CD8-positive, alpha-beta T cell (primary cell): ENCODE measurements at regions of chr4 and their contacts with region 1.

Region 1: DNA sequence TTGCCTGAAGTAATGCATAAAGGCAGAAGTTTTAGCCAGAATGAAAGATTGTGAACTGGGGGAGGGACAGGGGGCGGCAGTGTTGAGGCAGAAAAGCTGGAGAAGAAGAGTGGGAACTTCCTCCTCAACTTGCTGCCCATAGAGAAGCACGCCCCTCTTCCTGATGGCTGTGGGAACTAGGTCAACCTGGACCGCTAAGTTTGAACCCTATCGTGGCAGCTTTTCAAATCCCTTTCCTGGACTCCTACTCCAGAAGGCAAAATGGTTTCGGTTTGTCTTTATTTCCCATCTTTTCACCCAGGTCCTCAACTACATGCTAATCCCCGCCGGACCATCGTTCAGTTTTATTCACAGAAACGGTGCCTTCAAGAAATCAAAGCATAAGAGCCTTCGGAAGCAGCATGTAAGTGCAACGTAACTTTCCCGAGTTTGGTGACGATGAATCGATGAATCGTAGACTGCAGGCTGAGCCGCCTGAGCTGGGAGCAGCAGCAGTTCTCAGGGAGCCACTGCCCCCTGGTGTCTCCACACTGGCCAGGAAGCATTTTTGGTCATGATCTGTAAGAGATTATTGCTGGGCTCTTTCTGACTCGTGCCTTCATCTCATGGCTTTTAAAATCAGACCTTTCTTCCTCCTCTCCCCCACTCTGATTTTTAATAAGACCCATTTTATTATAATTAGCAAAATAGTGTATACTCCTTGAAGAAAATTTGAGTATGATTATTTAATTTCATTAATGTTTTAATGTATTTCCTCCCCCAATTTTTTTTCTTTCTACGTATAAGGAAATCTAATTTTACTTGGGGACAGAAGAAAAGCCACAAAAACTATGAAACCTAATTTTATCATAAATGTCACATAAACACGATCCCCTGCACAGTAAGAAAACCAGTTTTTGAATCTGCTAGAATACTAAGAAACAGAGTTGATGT is 21.4 kb downstream of the SPINK2 start:
- DNase-seq: peak; percentile 66 to 91 (median 82)
- ATAC-seq: peak; percentile 98
- H3K4me3 ChIP-seq: peak overlapping the region; percentile 53 to 78
- H3K4me3 Mint-ChIP-seq: peak overlapping the region; percentile 94
- H3K27ac ChIP-seq: peak overlapping the region; percentile 43 to 76
- H3K27ac Mint-ChIP-seq: peak overlapping the region; percentile 90
- H3K4me1 ChIP-seq: peaks cover 14% of the 10 kb centered on the region
- H3K4me1 Mint-ChIP-seq: peaks cover 23% of the 10 kb centered on the region
- H3K27me3 ChIP-seq: no peaks in the 10 kb centered on the region
- H3K27me3 Mint-ChIP-seq: no peaks in the 10 kb centered on the region
- CTCF ChIP-seq: peak; percentile 83

Region 2: GRCh38 chr4:56424697-56425514 is 375.2 kb before region 1 on chr4:
- CTCF ChIA-PET with region 1: interaction called, 22 read pairs
- POLR2A ChIA-PET with region 1: no interaction called
- intact Hi-C with region 1: loop called (anchors 1 kb)
- DNase-seq: peak in 7 of 9 experiments; percentile 21 to 71 (median 52)
- ATAC-seq: peak; percentile 61
- H3K4me3 ChIP-seq: no peak overlapping the region
- H3K4me3 Mint-ChIP-seq: no peak overlapping the region
- H3K27ac ChIP-seq: no peak overlapping the region
- H3K27ac Mint-ChIP-seq: no peak overlapping the region
- H3K4me1 ChIP-seq: no peaks in the 10 kb centered on the region
- H3K4me1 Mint-ChIP-seq: peaks cover 8% of the 10 kb centered on the region
- H3K27me3 ChIP-seq: no peaks in the 10 kb centered on the region
- H3K27me3 Mint-ChIP-seq: no peaks in the 10 kb centered on the region
- CTCF ChIP-seq: peak; percentile 90

Region 3: DNA sequence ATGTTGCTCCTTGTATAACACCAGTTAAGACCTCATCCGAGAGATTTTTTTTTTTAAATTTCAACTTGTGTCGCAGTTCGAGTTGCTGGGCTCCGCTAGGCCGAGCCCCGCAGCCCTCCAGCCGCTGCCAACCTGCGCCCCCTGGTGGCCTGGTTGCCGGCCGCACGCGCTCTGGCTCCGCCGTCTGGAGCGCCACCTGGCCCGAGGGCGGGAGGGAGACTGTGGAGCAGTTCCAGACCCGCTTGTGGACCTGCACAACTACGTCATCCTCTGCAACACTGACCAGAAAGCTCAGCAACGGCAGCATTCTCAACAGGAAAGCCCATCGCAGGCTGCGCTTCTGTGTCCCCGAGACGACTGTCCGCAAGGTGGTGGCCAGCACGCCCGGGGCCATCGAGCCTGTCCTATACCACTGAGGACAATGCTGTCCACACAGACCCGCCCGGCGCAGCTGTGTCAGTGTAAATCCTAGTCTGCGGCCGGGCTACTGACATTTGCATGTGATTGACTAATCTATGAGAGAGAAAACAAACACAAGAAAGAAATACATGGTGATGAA is 255.4 kb before region 1 on chr4:
- CTCF ChIA-PET with region 1: interaction called, 7 read pairs
- POLR2A ChIA-PET with region 1: no interaction called
- intact Hi-C with region 1: loop called in 1 of 2 experiments (anchors 1 kb)
- DNase-seq: peak; percentile 77 to 95 (median 85)
- ATAC-seq: peak; percentile 99
- H3K4me3 ChIP-seq: peak overlapping the region; percentile 27 to 38
- H3K4me3 Mint-ChIP-seq: peak overlapping the region; percentile 73
- H3K27ac ChIP-seq: no peak overlapping the region
- H3K27ac Mint-ChIP-seq: no peak overlapping the region
- H3K4me1 ChIP-seq: peaks cover 14% of the 10 kb centered on the region
- H3K4me1 Mint-ChIP-seq: peaks cover 15% of the 10 kb centered on the region
- H3K27me3 ChIP-seq: peaks cover 0 to 6% of the 10 kb centered on the region in 2 experiments
- H3K27me3 Mint-ChIP-seq: no peaks in the 10 kb centered on the region
- CTCF ChIP-seq: peak; percentile 98

Region 4: GRCh38 chr4:56626963-56627362 is 173.1 kb before region 1 on chr4:
- CTCF ChIA-PET with region 1: interaction called, 11 read pairs
- POLR2A ChIA-PET with region 1: no interaction called
- intact Hi-C with region 1: no loop called
- DNase-seq: peak in 2 of 9 experiments; percentile 19 to 32
- ATAC-seq: no peak
- H3K4me3 ChIP-seq: no peak overlapping the region
- H3K4me3 Mint-ChIP-seq: no peak overlapping the region
- H3K27ac ChIP-seq: no peak overlapping the region
- H3K27ac Mint-ChIP-seq: no peak overlapping the region
- H3K4me1 ChIP-seq: no peaks in the 10 kb centered on the region
- H3K4me1 Mint-ChIP-seq: no peaks in the 10 kb centered on the region
- H3K27me3 ChIP-seq: no peaks in the 10 kb centered on the region
- H3K27me3 Mint-ChIP-seq: peaks cover 1% of the 10 kb centered on the region
- CTCF ChIP-seq: no peak

Region 5: DNA sequence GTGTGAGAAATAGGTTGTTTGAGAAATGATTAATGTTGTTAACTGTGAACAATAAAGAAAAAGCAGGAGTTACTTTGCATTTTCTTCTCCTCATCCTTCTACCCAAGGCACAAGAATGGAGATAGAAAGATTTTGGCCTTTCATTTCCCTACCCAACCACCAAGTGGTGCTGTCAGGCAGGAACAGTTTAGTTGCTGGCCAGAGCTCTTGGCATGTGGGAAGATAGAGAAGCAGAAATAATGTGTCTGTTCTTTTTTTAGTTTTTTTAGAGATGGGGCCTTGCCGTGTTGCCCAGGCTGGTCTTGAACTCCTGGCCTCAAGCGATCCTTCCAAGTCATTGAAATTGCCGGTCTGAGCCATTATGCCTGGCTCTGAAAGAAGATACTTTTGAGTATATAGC is 131.8 kb before region 1 on chr4:
- CTCF ChIA-PET with region 1: interaction called, 4 read pairs
- POLR2A ChIA-PET with region 1: no interaction called
- intact Hi-C with region 1: loop called (anchors 1 to 10 kb)
- DNase-seq: peak in 2 of 9 experiments; percentile 18 to 28
- ATAC-seq: no peak
- H3K4me3 ChIP-seq: no peak overlapping the region
- H3K4me3 Mint-ChIP-seq: no peak overlapping the region
- H3K27ac ChIP-seq: no peak overlapping the region
- H3K27ac Mint-ChIP-seq: no peak overlapping the region
- H3K4me1 ChIP-seq: no peaks in the 10 kb centered on the region
- H3K4me1 Mint-ChIP-seq: no peaks in the 10 kb centered on the region
- H3K27me3 ChIP-seq: no peaks in the 10 kb centered on the region
- H3K27me3 Mint-ChIP-seq: peaks cover 14% of the 10 kb centered on the region
- CTCF ChIP-seq: no peak

Region 6: GRCh38 chr4:56757821-56758411 is 42.2 kb before region 1 on chr4:
- CTCF ChIA-PET with region 1: interaction called, 30 read pairs
- POLR2A ChIA-PET with region 1: interaction called, 8 read pairs
- intact Hi-C with region 1: loop called in 1 of 2 experiments (anchors 1 kb)
- DNase-seq: peak; percentile 26 to 85 (median 65)
- ATAC-seq: peak; percentile 82
- H3K4me3 ChIP-seq: peak overlapping the region; percentile 33 to 44
- H3K4me3 Mint-ChIP-seq: peak overlapping the region; percentile 82
- H3K27ac ChIP-seq: peak overlapping the region; percentile 29 to 81
- H3K27ac Mint-ChIP-seq: peak overlapping the region; percentile 98
- H3K4me1 ChIP-seq: peaks cover 41% of the 10 kb centered on the region
- H3K4me1 Mint-ChIP-seq: peaks cover 60% of the 10 kb centered on the region
- H3K27me3 ChIP-seq: no peaks in the 10 kb centered on the region
- H3K27me3 Mint-ChIP-seq: no peaks in the 10 kb centered on the region
- CTCF ChIP-seq: no peak

Region 7: DNA sequence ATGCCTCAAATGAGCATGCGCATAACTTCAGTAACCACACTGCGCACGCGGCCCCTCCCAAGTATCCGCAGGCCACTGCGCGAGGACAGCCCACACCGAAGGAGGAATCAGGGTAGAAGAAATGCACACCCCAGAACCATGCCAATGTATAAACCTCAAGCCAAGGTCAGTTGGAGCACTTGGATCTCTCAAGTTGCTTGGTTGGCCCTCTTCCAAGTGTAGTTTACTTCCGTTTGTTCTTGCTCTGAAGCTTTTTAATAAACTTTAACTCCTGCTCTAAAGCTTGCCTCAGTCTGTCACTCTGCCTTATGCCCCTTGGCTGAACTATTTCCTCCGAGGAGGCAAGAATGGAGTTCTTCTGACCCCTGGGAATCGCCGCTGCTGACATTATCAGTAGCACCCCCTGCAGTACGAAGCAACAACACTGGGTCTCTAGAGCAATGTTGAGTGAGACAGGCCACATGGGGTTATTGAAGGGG is 43.4 kb after region 1 on chr4:
- CTCF ChIA-PET with region 1: interaction called, 49 read pairs
- POLR2A ChIA-PET with region 1: no interaction called
- intact Hi-C with region 1: no loop called
- DNase-seq: no peak
- ATAC-seq: no peak
- H3K4me3 ChIP-seq: no peak overlapping the region
- H3K4me3 Mint-ChIP-seq: no peak overlapping the region
- H3K27ac ChIP-seq: no peak overlapping the region
- H3K27ac Mint-ChIP-seq: no peak overlapping the region
- H3K4me1 ChIP-seq: no peaks in the 10 kb centered on the region
- H3K4me1 Mint-ChIP-seq: no peaks in the 10 kb centered on the region
- H3K27me3 ChIP-seq: no peaks in the 10 kb centered on the region
- H3K27me3 Mint-ChIP-seq: no peaks in the 10 kb centered on the region
- CTCF ChIP-seq: no peak